Tibial artery (tissue), 4 donors: ENCODE measurements at regions of chr4 and their contacts with region 1.

Region 1: DNA sequence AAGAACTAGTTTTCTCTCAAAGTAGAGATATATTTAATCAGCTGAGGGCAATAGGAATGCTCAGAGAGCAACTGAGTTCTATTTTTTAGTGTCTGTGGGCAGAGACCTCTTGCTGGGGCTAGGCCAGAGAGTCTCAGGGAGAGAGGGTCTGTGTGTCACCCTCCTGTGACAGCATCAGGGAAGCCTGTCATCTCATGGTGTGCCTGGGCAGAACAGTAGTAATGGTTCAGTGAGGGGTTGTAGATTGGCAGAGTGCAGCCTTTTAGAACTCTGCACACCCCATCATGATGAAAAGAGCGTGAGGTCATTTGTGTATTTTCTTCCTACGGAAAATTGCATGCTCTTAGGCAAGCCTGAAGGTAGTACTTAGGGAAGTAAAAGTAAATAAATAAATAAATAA is 1396.5 kb upstream of the AGA start:
- DNase-seq: no peak
- H3K4me3 ChIP-seq: no peak overlapping the region
- H3K27ac ChIP-seq: no peak overlapping the region
- H3K4me1 ChIP-seq: no peaks in the 10 kb centered on the region
- H3K27me3 ChIP-seq: no peaks in the 10 kb centered on the region
- CTCF ChIP-seq: no peak

Region 2: GRCh38 chr4:178602833-178603232 is 235.9 kb before region 1 on chr4:
- intact Hi-C with region 1: loop called (anchors 5 kb)
- DNase-seq: no peak
- H3K4me3 ChIP-seq: no peak overlapping the region
- H3K27ac ChIP-seq: no peak overlapping the region
- H3K4me1 ChIP-seq: no peaks in the 10 kb centered on the region
- H3K27me3 ChIP-seq: no peaks in the 10 kb centered on the region
- CTCF ChIP-seq: no peak